GM12878 (cell line): ENCODE measurements at regions of chr4 and their contacts with region 1.

Region 1: GRCh38 chr4:176824645-176825366 is 32.1 kb upstream of the VEGFC start:
- DNase-seq: no peak
- ATAC-seq: no peak
- H3K4me3 ChIP-seq: no peak overlapping the region
- H3K27ac ChIP-seq: no peak overlapping the region
- H3K4me1 ChIP-seq: no peaks in the 10 kb centered on the region
- H3K27me3 ChIP-seq: no peaks in the 10 kb centered on the region
- CTCF ChIP-seq: no peak
- EP300 ChIP-seq: no peak
- POLR2A ChIP-seq: no peak
- RAD21 ChIP-seq: no peak

Region 2: DNA sequence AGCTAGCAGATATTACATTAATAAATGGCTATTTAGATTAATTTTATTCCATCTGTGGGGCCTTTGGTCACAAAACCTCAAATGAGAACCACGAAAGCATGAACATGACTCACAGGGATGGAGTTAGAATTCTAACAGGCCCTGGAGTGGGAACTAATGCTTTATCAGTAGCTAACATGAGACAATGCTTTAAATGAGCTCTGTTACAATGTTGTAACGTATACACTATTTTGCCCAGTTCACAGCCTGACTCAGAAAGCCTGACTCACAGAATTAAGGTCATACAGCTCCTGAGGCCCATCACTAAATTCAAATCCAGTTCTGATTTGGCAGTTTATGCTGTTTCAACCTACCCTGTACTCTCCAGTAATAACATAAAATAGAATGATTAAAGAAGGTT is 55.3 kb before region 1 on chr4:
- CTCF ChIA-PET with region 1: no interaction called
- POLR2A ChIA-PET with region 1: no interaction called
- RAD21 ChIA-PET with region 1: no interaction called
- SMC1A ChIA-PET with region 1: no interaction called
- in situ Hi-C with region 1: no loop called
- intact Hi-C with region 1: no loop called
- DNase-seq: no peak
- ATAC-seq: no peak
- H3K4me3 ChIP-seq: no peak overlapping the region
- H3K27ac ChIP-seq: no peak overlapping the region
- H3K4me1 ChIP-seq: no peaks in the 10 kb centered on the region
- H3K27me3 ChIP-seq: no peaks in the 10 kb centered on the region
- CTCF ChIP-seq: no peak
- EP300 ChIP-seq: no peak
- POLR2A ChIP-seq: no peak
- RAD21 ChIP-seq: no peak

Region 3: GRCh38 chr4:177010418-177010817 is 185.6 kb after region 1 on chr4:
- CTCF ChIA-PET with region 1: no interaction called
- POLR2A ChIA-PET with region 1: interaction called, 11 read pairs
- RAD21 ChIA-PET with region 1: no interaction called
- SMC1A ChIA-PET with region 1: no interaction called
- in situ Hi-C with region 1: no loop called
- intact Hi-C with region 1: no loop called
- DNase-seq: no peak
- ATAC-seq: no peak
- H3K4me3 ChIP-seq: no peak overlapping the region
- H3K27ac ChIP-seq: no peak overlapping the region
- H3K4me1 ChIP-seq: no peaks in the 10 kb centered on the region
- H3K27me3 ChIP-seq: no peaks in the 10 kb centered on the region
- CTCF ChIP-seq: no peak
- EP300 ChIP-seq: no peak
- POLR2A ChIP-seq: no peak
- RAD21 ChIP-seq: no peak

Region 4: DNA sequence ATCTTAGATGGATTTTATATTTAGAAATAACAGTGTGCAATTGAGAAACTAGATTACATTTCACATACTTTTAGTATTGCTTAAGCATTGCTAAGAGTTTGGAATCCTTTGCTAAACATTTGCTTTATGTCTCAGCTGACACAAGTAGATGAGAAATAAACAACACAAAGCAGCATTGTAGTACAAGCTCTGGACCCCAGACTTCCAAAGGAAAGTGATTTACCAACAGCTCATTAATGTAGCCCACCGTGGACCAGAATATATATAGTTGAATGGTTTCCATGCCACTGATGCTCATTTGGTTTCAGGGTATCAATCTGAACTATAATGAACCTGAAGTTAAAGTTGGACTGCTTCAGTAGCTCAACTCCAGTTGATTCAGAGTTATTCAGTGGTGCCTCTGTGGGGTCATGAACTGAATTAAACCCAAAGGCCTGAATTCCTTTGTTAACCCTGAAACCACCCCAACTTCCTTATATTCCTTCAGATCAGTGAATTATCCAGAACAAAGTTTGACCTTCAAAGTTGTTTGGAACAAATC is 352.8 kb after region 1 on chr4:
- CTCF ChIA-PET with region 1: no interaction called
- POLR2A ChIA-PET with region 1: no interaction called
- RAD21 ChIA-PET with region 1: no interaction called
- SMC1A ChIA-PET with region 1: no interaction called
- in situ Hi-C with region 1: no loop called
- intact Hi-C with region 1: no loop called
- DNase-seq: no peak
- ATAC-seq: no peak
- H3K4me3 ChIP-seq: no peak overlapping the region
- H3K27ac ChIP-seq: no peak overlapping the region
- H3K4me1 ChIP-seq: no peaks in the 10 kb centered on the region
- H3K27me3 ChIP-seq: no peaks in the 10 kb centered on the region
- CTCF ChIP-seq: no peak
- EP300 ChIP-seq: no peak
- POLR2A ChIP-seq: no peak
- RAD21 ChIP-seq: no peak